Gastrocnemius medialis (tissue), 4 donors: ENCODE measurements at regions of chr22 and their contacts with region 1.

Region 1: GRCh38 chr22:39068033-39068791 is 8.9 kb upstream of the APOBEC3G start:
- DNase-seq: no peak
- ATAC-seq: no peak
- H3K4me3 ChIP-seq: no peak overlapping the region
- H3K27ac ChIP-seq: no peak overlapping the region
- H3K4me1 ChIP-seq: no peaks in the 10 kb centered on the region
- H3K27me3 ChIP-seq: no peaks in the 10 kb centered on the region
- CTCF ChIP-seq: no peak
- POLR2A ChIP-seq: no peak

Region 2: DNA sequence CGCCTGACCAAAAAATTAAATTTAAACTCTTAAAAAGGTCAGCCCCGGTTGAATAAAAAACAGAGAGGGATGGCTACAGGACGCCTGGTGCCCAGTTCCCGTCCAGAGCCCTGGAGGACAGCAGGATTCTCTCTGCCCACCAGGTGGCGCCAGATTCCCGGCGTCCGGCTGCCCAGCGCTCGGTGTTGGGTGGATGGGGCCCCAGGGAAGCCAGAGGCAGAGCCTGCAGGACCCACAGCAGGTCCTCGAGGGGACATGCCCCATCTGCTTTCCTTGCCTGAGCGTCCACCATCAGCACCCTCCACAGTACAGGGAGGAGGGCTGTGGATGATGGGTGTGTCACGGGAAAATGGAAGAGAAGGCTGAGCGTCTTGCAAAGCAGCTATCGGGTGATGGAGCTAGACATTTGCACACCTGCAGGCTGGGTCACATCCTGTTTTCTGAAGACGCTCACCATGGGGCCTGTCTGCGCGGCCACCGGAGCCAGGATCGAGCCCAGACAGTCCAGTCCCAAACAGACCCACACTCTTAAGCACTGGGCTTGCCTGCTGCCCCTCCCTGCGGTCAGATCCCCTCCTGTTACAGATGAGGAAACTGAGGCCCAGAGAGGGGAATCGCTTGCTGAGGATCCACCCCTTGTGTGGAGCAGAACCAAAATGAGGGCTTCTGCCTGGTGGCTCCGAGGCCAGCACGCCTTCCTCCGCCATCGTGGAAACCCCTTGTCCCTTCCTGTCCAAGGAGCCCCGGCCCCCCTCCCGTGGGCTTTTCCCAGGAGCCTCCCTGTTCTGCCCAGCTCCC is 102.8 kb after region 1 on chr22:
- in situ Hi-C with region 1: no loop called
- intact Hi-C with region 1: no loop called
- DNase-seq: peak; percentile 48 to 72
- ATAC-seq: peak; percentile 81 to 87
- H3K4me3 ChIP-seq: peak overlapping the region in 1 of 4 donors; percentile 21
- H3K27ac ChIP-seq: peak overlapping the region in 3 of 4 donors; percentile 23 to 70 (median 32)
- H3K4me1 ChIP-seq: peaks cover 45 to 53% of the 10 kb centered on the region in 2 donors
- H3K27me3 ChIP-seq: no peaks in the 10 kb centered on the region
- CTCF ChIP-seq: peak; percentile 89 to 99 (median 98)
- POLR2A ChIP-seq: no peak

Region 3: DNA sequence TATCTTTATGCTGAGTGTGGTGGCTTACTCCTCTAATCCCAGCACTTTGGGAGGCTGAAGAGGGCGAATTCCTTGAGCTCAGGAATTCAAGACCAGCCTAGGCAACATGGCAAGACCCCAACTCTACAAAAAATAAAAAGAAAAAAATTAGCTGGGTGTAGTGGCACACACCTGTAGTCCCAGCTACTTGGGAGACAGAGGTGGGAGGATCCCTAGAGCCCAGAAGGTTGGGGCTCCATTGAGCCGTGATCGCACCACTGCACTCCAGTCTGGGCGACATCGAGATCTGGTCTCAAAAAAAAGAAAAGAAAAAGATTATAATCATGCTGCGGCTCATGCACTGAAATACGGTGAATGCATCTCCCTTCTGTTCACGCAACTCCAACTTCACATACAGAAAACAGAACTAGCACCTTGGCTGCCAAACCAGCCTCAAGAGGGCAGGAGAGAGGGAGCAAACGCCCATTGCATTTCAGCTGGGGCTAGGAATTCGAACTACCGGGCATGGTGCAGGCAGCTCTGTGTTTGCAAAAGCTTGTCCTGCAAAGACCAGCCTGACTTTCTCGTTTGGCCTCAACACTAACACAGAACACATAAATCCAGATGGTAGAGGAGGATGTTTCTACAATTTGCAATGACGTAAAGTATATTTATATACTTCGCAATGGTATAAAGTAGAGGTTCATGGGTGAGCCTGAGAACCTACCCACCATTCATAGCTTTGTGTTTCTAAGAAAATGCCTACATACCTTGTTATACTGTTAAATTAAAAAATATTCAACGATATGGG is 275.2 kb after region 1 on chr22:
- in situ Hi-C with region 1: no loop called
- intact Hi-C with region 1: loop called (anchors 10 kb)
- DNase-seq: peak; percentile 24 to 46
- ATAC-seq: peak; percentile 73 to 87
- H3K4me3 ChIP-seq: no peak overlapping the region
- H3K27ac ChIP-seq: no peak overlapping the region
- H3K4me1 ChIP-seq: peaks cover 0 to 6% of the 10 kb centered on the region in 2 donors
- H3K27me3 ChIP-seq: no peaks in the 10 kb centered on the region
- CTCF ChIP-seq: peak; percentile 17 to 71 (median 44)
- POLR2A ChIP-seq: no peak